Calu3 (cell line): ENCODE measurements at regions of chr6 and their contacts with region 1.

Region 1: GRCh38 chr6:47780510-47781356 is 1.1 kb upstream of the OPN5 start:
- DNase-seq: peak; percentile 42
- H3K4me3 Mint-ChIP-seq: peak overlapping the region; percentile 9
- H3K27ac Mint-ChIP-seq: peak overlapping the region; percentile 59
- H3K4me1 Mint-ChIP-seq: no peaks in the 10 kb centered on the region
- H3K27me3 Mint-ChIP-seq: no peaks in the 10 kb centered on the region
- CTCF ChIP-seq: peak; percentile 29

Region 2: DNA sequence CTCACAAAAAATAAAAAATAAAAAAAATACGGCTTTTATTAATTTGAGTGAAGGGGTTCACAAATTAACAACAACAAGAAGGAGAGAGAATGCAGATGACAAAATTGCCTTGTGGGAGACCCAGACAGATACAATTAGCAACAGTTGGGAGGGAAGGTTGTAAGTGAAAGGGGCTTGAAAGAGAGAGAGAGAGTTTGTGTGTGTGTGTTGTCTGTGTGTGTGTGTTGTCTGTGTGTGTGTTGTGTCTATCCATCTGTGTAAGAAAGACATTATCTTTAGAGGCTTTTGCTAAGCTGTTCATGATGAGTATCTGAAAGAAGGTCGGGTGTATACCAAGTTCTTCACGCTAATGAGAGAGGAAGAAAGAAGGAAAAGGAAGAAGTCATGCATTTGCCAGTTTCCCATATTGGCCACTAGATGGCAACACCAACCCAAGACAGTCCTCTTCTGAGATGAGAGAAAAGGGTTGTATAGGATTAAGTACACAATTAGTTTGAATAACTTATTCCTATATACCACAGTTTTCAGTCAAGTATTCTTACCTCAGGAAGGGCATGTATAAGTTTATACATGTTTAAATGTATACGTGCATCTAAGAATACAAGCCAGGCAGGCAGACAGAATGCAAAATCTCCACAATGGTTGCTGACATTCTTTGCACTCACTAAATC is 366.8 kb before region 1 on chr6:
- CTCF ChIA-PET with region 1: no interaction called
- intact Hi-C with region 1: loop called (anchors 1 kb)
- DNase-seq: no peak
- H3K4me3 Mint-ChIP-seq: peak overlapping the region; percentile 37
- H3K27ac Mint-ChIP-seq: peak overlapping the region; percentile 81
- H3K4me1 Mint-ChIP-seq: peaks cover 50% of the 10 kb centered on the region
- H3K27me3 Mint-ChIP-seq: no peaks in the 10 kb centered on the region
- CTCF ChIP-seq: peak; percentile 74

Region 3: DNA sequence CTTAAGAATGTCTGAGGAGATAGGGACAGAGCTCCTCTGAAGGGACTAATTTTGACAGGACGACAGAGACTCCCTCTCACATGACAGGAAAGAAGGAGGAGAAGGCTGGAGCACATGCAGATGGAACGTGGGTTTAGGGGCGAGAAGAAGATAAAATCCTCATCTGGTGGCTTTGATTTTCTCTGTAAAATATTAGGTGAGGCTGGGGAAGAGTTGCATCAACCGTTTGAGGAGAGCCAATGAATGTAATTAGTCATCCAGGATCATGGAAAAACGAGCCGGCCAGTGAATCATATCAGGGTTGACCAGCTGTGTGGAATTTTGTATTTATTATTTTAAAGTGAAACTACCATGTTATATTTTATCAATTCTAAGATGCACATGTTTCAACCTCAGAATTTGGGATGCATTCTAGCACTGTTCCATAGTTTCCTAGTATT is 129.2 kb before region 1 on chr6:
- CTCF ChIA-PET with region 1: interaction called, 5 read pairs
- intact Hi-C with region 1: loop called (anchors 5 kb)
- DNase-seq: no peak
- H3K4me3 Mint-ChIP-seq: no peak overlapping the region
- H3K27ac Mint-ChIP-seq: no peak overlapping the region
- H3K4me1 Mint-ChIP-seq: peaks cover 33% of the 10 kb centered on the region
- H3K27me3 Mint-ChIP-seq: no peaks in the 10 kb centered on the region
- CTCF ChIP-seq: no peak

Region 4: GRCh38 chr6:47733879-47734558 is 46.7 kb before region 1 on chr6:
- CTCF ChIA-PET with region 1: interaction called, 8 read pairs
- intact Hi-C with region 1: loop called (anchors 2 kb)
- DNase-seq: peak; percentile 48
- H3K4me3 Mint-ChIP-seq: no peak overlapping the region
- H3K27ac Mint-ChIP-seq: no peak overlapping the region
- H3K4me1 Mint-ChIP-seq: peaks cover 45% of the 10 kb centered on the region
- H3K27me3 Mint-ChIP-seq: no peaks in the 10 kb centered on the region
- CTCF ChIP-seq: peak; percentile 54

Region 5: DNA sequence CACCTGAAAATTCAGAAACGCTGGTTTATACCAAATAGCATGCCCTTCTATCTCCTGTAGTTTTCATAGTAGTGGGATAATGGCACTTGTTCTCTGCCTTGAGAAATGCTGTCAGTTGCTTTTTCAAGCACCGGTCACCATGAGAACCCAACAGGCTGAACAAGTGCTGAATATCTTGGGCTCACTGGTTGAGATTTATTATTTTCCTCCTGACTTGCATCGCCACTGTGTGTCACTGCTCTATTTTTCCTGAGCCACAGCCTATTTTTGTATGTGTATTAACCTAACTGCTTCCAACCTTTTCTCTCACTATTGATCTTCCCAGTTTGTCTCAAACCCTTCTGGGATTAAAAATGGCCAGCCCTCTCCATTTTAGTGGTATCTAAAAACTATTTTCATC is 73.0 kb after region 1 on chr6:
- CTCF ChIA-PET with region 1: interaction called, 14 read pairs
- intact Hi-C with region 1: no loop called
- DNase-seq: no peak
- H3K4me3 Mint-ChIP-seq: no peak overlapping the region
- H3K27ac Mint-ChIP-seq: no peak overlapping the region
- H3K4me1 Mint-ChIP-seq: no peaks in the 10 kb centered on the region
- H3K27me3 Mint-ChIP-seq: peaks cover 51% of the 10 kb centered on the region
- CTCF ChIP-seq: no peak